ENCODE measurements at regions of chr7 and their contacts with region 1.

Region 1: DNA sequence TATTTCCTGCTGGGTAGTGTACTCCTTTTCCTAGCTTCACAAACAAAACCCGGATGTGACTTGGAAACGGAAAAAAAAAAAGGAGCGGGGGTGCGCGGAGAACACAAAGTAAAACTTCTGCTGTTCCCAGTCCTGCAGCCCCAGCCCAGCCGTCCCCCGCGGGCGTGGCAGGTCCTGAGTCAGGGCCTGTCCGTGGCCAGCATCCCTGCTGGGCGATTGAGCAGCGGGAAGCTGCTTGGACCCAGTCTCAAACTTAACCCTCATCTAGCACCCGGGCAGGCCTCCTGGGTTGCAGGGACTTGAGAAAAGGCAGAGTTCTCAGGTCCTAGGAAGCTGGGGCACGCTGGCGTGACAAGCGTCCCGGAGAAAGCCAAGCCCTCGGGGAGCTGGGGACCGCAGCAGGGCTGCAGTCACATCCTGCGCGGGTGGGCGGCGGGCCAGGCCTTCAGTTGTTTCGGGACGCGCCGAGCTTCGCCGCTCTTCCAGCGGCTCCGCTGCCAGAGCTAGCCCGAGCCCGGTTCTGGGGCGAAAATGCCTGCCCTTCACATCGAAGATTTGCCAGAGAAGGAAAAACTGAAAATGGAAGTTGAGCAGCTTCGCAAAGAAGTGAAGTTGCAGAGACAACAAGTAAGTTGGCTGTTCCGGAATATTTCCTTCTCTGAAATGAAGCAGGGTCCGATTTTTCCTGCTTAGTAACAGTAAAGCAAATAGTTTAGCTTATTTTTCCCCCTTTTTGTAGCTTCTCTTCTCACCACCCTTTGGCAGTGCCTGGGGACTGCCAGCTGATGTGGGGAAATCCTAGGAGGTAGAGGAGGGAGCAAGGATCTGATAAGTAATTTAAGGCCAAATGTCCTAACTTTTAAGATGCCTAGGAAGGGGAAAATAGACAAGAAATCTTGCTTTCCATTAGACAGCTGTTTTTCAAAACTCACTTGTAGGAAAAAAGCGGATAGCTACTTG is at the start of gene GNG11:
- DNase-seq: peak; percentile 66
- ATAC-seq: peak; percentile 84
- H3K4me3 ChIP-seq: peak within 1 kb of the TSS; percentile 99
- H3K27ac ChIP-seq: peak within 1 kb of the TSS; percentile 80
- H3K4me1 ChIP-seq: peaks cover 7% of the 10 kb centered on the region
- H3K27me3 ChIP-seq: no peaks in the 10 kb centered on the region
- CTCF ChIP-seq: no peak
- POLR2A ChIP-seq: 0 out of 2 replicates have a peak, but pooled peaks have one; percentile 34
- RAD21 ChIP-seq: no peak
- total RNA-seq, gene GNG11: 6.1 and 11.1 TPM in 2 replicates

Region 2: GRCh38 chr7:94004024-94004951 is 82.4 kb after region 1 on chr7 and contains the start of gene BET1:
- CTCF ChIA-PET with region 1: interaction called, 3 read pairs
- POLR2A ChIA-PET with region 1: interaction called, 4 read pairs
- dilution Hi-C with region 1: no loop called
- in situ Hi-C with region 1: no loop called
- intact Hi-C with region 1: loop called (anchors 2 kb)
- DNase-seq: peak; percentile 97
- ATAC-seq: peak; percentile 98
- H3K4me3 ChIP-seq: peak within 1 kb of the TSS; percentile 73
- H3K27ac ChIP-seq: peak within 1 kb of the TSS; percentile 84
- H3K4me1 ChIP-seq: peaks cover 2% of the 10 kb centered on the region; the same call in 1 of the 2 replicates
- H3K27me3 ChIP-seq: no peaks in the 10 kb centered on the region
- CTCF ChIP-seq: no peak
- POLR2A ChIP-seq: peak; percentile 84
- RAD21 ChIP-seq: no peak
- total RNA-seq, gene BET1: 9.9 and 36.4 TPM in 2 replicates

Region 3: DNA sequence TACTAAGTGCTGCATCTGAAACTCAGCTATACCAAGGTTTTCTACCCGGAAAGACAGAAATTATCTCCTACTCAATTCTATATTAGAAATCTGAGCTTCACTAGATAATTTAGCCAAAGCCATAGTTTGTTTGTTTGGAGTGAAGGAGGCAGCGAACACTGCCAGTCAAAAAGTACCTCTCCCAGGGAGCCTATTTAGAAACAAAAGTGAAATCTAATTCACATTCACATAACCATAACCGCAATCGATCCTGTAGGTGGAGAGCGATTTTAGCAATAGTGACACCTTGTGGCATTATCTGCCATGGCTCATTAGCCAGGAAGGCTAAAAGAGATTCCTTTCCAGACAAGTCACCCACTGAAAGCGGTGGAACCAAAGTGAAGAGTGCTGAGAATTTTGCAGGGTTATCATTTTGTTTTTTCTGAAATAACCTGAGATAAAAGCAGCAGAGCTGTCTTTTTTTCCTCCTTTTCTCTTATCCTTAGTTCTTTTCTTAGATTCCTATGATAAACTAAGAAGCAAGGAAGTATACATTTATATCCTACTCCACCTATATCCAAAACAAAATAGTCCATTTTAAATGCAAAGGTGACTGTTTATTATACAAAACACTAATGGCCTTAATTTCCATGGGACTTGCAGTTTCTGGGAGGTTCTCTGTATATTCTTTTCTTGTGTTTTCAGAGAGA is 165.9 kb after region 1 on chr7:
- CTCF ChIA-PET with region 1: no interaction called
- POLR2A ChIA-PET with region 1: interaction called, 3 read pairs
- dilution Hi-C with region 1: no loop called
- in situ Hi-C with region 1: no loop called
- intact Hi-C with region 1: loop called (anchors 2 kb)
- DNase-seq: peak; percentile 85
- ATAC-seq: peak; percentile 87
- H3K4me3 ChIP-seq: peak overlapping the region; percentile 15; the same call in 1 of the 2 replicates
- H3K27ac ChIP-seq: no peak overlapping the region
- H3K4me1 ChIP-seq: peaks cover 9% of the 10 kb centered on the region
- H3K27me3 ChIP-seq: no peaks in the 10 kb centered on the region
- CTCF ChIP-seq: peak; percentile 78
- POLR2A ChIP-seq: no peak
- RAD21 ChIP-seq: peak; percentile 84

Region 4: DNA sequence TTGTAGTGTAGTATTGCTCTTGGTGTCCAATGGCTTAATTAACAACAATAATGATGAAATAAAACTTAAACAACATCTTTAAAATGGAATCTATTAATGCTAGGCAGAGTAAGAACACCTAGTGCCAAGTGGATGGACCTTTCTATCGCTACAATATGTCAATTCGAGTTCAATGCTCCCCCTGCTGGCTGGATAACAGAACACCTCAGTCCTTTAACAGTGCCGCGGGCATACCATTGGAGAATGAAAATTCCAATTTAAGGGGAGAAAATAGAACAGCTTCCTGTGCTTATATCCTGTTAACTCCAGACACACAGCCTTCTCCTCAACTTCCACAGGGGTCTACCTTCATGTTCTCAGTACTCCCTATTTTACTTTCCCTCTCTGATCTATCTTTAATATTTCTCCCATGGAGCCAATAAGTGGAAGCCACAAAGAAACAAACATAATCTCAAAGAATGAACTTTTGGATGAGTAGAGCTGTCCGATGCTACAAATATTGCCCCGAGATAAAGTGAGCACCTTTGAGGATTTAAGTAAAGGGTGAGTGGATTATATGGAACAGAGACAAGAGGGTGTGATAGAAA is 514.2 kb after region 1 on chr7:
- CTCF ChIA-PET with region 1: no interaction called
- POLR2A ChIA-PET with region 1: no interaction called
- dilution Hi-C with region 1: no loop called
- in situ Hi-C with region 1: loop called (anchors 25 kb)
- intact Hi-C with region 1: no loop called
- DNase-seq: peak; percentile 78
- ATAC-seq: peak; percentile 43
- H3K4me3 ChIP-seq: no peak overlapping the region
- H3K27ac ChIP-seq: no peak overlapping the region
- H3K4me1 ChIP-seq: peaks cover 8% of the 10 kb centered on the region
- H3K27me3 ChIP-seq: no peaks in the 10 kb centered on the region
- CTCF ChIP-seq: peak; percentile 81
- POLR2A ChIP-seq: no peak
- RAD21 ChIP-seq: peak; percentile 68

Measured in IMR-90 (cell line).